Mammary epithelial cell (primary cell): ENCODE measurements at regions of chr1 and their contacts with region 1.

Region 1: GRCh38 chr1:183023601-183024316 is 539 bp downstream of the LAMC1 start:
- DNase-seq: peak; percentile 80
- H3K4me3 ChIP-seq: peak overlapping the region; percentile 77 to 96 (median 80)
- H3K27ac ChIP-seq: peak overlapping the region; percentile 87
- H3K4me1 ChIP-seq: peaks cover 50% of the 10 kb centered on the region
- H3K27me3 ChIP-seq: no peaks in the 10 kb centered on the region
- CTCF ChIP-seq: peak; percentile 53 to 82

Region 2: GRCh38 chr1:183058851-183059502 is 35.2 kb after region 1 on chr1:
- CTCF ChIA-PET with region 1: no interaction called
- dilution Hi-C with region 1: no loop called
- in situ Hi-C with region 1: no loop called
- intact Hi-C with region 1: loop called (anchors 2 kb)
- DNase-seq: no peak
- H3K4me3 ChIP-seq: no peak overlapping the region
- H3K27ac ChIP-seq: peak overlapping the region; percentile 3
- H3K4me1 ChIP-seq: peaks cover 20% of the 10 kb centered on the region
- H3K27me3 ChIP-seq: no peaks in the 10 kb centered on the region
- CTCF ChIP-seq: no peak

Region 3: DNA sequence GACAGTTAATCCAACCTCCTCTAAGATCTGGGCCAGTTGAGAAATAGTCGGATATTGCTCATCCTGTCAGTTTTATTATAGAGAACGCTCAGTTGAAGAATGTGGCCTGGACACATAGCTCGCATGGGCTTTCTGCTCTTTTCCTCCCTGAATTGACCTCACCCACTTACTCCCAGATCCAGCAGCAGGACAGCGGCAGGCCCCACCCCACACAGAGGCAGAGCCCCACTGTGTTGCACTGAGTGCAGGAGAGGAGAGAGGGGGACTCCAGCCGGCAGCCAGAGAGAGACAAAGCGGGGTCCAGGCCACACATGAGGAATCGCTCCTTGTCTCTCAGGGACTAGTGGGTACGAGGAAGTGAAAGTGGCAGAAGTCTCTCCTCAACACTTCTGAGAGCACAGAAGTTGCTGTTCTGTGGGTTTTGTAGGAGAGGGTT is 78.1 kb after region 1 on chr1:
- CTCF ChIA-PET with region 1: no interaction called
- dilution Hi-C with region 1: no loop called
- in situ Hi-C with region 1: no loop called
- intact Hi-C with region 1: no loop called
- DNase-seq: no peak
- H3K4me3 ChIP-seq: no peak overlapping the region
- H3K27ac ChIP-seq: no peak overlapping the region
- H3K4me1 ChIP-seq: peaks cover 16% of the 10 kb centered on the region
- H3K27me3 ChIP-seq: no peaks in the 10 kb centered on the region
- CTCF ChIP-seq: no peak

Region 4: DNA sequence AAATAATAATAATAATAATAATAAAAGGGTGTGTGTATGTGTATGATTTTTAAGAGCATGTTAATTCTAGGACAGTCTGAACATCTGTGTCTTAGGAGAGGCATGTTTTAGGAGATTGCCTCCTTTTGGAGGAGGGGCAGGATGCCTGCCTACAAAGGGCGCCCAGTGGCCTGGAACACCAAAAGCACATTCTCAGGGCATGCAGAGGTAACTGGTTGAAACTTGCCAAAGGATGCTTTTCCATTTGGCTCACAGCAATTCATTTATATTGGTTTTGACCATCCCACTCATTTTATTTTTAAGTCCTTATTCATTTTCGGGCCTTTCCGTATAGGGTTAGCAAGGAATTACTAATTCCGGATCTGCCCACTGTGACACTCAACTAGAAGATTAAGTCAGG is 141.2 kb after region 1 on chr1:
- CTCF ChIA-PET with region 1: no interaction called
- dilution Hi-C with region 1: no loop called
- in situ Hi-C with region 1: no loop called
- intact Hi-C with region 1: loop called (anchors 1 kb)
- DNase-seq: peak; percentile 96
- H3K4me3 ChIP-seq: peak overlapping the region in 1 of 3 experiments; percentile 15
- H3K27ac ChIP-seq: peak overlapping the region; percentile 100
- H3K4me1 ChIP-seq: peaks cover 51% of the 10 kb centered on the region
- H3K27me3 ChIP-seq: no peaks in the 10 kb centered on the region
- CTCF ChIP-seq: no peak

Region 5: GRCh38 chr1:183185941-183186490 is 162.3 kb after region 1 on chr1 and contains the start of gene LAMC2:
- CTCF ChIA-PET with region 1: no interaction called
- dilution Hi-C with region 1: no loop called
- in situ Hi-C with region 1: loop called in 1 of 2 experiments (anchors 10 kb)
- intact Hi-C with region 1: loop called (anchors 2 kb)
- DNase-seq: peak; percentile 99
- H3K4me3 ChIP-seq: peak within 1 kb of the TSS; percentile 62 to 98 (median 92)
- H3K27ac ChIP-seq: peak within 1 kb of the TSS; percentile 100
- H3K4me1 ChIP-seq: peaks cover 55% of the 10 kb centered on the region
- H3K27me3 ChIP-seq: no peaks in the 10 kb centered on the region
- CTCF ChIP-seq: peak; percentile 34 to 71
- total RNA-seq, gene LAMC2: 1,201 to 2,277 TPM

Region 6: DNA sequence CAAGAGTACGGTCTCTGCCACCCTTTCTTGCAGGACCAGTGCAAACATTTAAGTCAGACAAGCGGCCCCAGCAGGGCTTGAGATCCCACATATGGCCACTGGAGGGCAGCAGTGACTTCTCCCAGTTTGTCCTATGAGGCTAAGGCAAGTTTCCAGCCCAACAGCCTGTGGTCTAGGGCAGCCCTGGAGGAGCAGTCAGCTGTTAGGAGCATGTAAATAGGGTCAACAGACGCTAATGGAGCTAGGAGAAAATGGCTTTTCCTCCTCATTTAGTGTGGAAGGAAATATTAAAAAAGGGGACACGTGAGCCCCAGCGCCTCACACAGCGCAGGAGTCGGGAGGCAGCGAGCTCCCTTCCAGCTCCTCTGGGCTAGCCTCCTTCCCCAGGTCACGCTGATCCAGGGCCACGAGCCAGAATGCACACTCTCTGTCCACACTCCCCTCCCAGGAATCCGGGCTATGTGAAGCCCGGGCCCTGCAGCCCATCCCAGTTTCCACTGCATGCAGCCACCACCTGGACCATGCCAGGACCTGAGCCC is 257.9 kb after region 1 on chr1:
- CTCF ChIA-PET with region 1: no interaction called
- dilution Hi-C with region 1: no loop called
- in situ Hi-C with region 1: no loop called
- intact Hi-C with region 1: loop called (anchors 1 kb)
- DNase-seq: peak; percentile 85
- H3K4me3 ChIP-seq: no peak overlapping the region
- H3K27ac ChIP-seq: peak overlapping the region; percentile 58
- H3K4me1 ChIP-seq: peaks cover 67% of the 10 kb centered on the region
- H3K27me3 ChIP-seq: no peaks in the 10 kb centered on the region
- CTCF ChIP-seq: peak; percentile 77 to 95

Region 7: GRCh38 chr1:183635606-183636333 is 612.0 kb after region 1 on chr1 and contains the start of gene ARPC5:
- CTCF ChIA-PET with region 1: no interaction called
- dilution Hi-C with region 1: no loop called
- in situ Hi-C with region 1: no loop called
- intact Hi-C with region 1: loop called (anchors 10 kb)
- DNase-seq: peak; percentile 99
- H3K4me3 ChIP-seq: peak within 1 kb of the TSS; percentile 85 to 95 (median 90)
- H3K27ac ChIP-seq: peak within 1 kb of the TSS; percentile 82
- H3K4me1 ChIP-seq: peaks cover 25% of the 10 kb centered on the region
- H3K27me3 ChIP-seq: no peaks in the 10 kb centered on the region
- CTCF ChIP-seq: no peak
- total RNA-seq, gene ARPC5: 162 to 186 TPM